ENCODE measurements at regions of chr1 and their contacts with region 1.

Region 1: DNA sequence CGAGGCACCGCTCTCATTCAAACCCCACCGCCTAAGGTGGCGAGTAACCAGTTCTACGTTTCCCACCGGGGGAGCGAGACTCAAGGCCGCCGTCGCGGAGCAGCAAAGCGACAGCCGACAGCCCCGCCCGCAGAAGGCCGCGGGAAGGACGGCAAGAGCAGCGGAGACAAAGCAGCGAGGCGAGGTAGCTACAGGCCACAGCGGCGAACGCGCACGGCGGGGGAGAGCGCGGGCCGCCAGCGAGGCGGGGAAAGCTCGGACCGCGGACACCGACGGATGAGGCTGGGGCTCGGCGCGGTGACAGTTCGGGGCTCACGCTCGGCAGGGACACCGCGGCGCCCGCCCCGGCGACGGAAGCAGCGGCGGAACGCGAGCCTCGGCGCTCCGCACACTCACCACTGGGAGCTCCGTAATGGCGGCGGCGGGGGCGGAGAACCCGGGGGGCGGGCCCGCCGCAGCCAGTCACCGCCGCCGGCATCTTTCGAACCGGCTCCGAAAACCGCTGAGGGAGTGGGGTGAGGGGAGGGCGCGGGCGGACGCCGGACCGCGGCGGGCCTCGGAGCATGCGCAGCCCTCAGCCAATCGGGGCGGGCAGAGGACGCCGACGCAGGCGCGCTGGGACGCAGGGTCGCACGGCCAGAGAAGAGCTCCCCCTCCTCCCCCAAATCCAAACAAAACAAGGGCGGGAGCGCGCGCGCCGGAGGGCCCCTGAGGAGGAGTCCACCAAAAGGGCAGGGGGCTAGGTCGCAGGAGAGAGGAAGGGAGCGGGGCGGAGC is 666 bp downstream of the HP1BP3 start:
- DNase-seq: peak; percentile 96 to 98
- ATAC-seq: peak; percentile 97
- H3K4me3 ChIP-seq: peak overlapping the region; percentile 59 to 83
- H3K27ac ChIP-seq: peak overlapping the region; percentile 82 to 89
- H3K4me1 ChIP-seq: no peaks in the 10 kb centered on the region
- H3K27me3 ChIP-seq: no peaks in the 10 kb centered on the region

Region 2: GRCh38 chr1:20551945-20552727 is 234.3 kb before region 1 on chr1 and contains the start of gene FAM43B:
- intact Hi-C with region 1: no loop called
- DNase-seq: peak; percentile 82 to 87
- ATAC-seq: peak; percentile 90
- H3K4me3 ChIP-seq: no peak within 1 kb of the TSS
- H3K27ac ChIP-seq: no peak within 1 kb of the TSS
- H3K4me1 ChIP-seq: no peaks in the 10 kb centered on the region
- H3K27me3 ChIP-seq: no peaks in the 10 kb centered on the region
- total RNA-seq, gene FAM43B: 0.52 to 2.7 TPM

Region 3: GRCh38 chr1:20732588-20733360 is 53.7 kb before region 1 on chr1 and contains the start of gene SH2D5:
- intact Hi-C with region 1: loop called in 1 of 2 experiments (anchors 5 kb)
- DNase-seq: peak; percentile 82 to 89
- ATAC-seq: peak; percentile 83
- H3K4me3 ChIP-seq: peak within 1 kb of the TSS; percentile 28 to 54
- H3K27ac ChIP-seq: peak within 1 kb of the TSS in 1 of 2 donors; percentile 78
- H3K4me1 ChIP-seq: no peaks in the 10 kb centered on the region
- H3K27me3 ChIP-seq: no peaks in the 10 kb centered on the region
- total RNA-seq, gene SH2D5: 0.26 to 0.39 TPM

Region 4: DNA sequence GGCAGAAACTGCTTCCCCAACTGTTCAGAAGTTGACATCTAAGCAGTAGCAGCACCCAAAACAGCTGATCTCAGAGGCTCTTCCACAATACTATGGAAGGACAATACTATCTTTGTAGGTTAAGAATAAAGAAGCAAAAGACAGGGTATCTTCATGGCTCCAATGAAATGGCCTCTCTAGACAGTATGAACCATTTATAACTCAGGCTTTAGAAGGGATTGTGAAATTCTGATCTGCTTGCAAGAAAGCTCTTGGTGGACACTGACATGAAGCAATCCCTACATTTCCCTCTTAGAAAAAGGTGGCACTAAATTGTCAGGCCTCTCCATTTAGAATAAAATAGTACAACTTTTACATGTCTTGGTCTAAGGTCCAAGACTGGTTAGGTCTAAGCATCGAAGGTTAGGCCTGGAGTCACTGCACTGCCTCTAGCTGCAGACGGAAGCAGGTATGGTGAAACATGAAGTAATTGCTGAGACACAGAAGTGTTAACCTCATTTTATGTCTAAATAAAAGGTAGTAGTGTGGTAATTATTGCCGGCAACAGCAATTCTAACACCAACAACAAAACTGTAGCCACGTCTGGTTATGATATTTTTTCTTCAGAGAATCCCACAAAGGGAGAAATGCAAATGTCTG is 51.2 kb after region 1 on chr1:
- intact Hi-C with region 1: no loop called
- DNase-seq: no peak
- ATAC-seq: no peak
- H3K4me3 ChIP-seq: no peak overlapping the region
- H3K27ac ChIP-seq: no peak overlapping the region
- H3K4me1 ChIP-seq: no peaks in the 10 kb centered on the region
- H3K27me3 ChIP-seq: no peaks in the 10 kb centered on the region

Region 5: DNA sequence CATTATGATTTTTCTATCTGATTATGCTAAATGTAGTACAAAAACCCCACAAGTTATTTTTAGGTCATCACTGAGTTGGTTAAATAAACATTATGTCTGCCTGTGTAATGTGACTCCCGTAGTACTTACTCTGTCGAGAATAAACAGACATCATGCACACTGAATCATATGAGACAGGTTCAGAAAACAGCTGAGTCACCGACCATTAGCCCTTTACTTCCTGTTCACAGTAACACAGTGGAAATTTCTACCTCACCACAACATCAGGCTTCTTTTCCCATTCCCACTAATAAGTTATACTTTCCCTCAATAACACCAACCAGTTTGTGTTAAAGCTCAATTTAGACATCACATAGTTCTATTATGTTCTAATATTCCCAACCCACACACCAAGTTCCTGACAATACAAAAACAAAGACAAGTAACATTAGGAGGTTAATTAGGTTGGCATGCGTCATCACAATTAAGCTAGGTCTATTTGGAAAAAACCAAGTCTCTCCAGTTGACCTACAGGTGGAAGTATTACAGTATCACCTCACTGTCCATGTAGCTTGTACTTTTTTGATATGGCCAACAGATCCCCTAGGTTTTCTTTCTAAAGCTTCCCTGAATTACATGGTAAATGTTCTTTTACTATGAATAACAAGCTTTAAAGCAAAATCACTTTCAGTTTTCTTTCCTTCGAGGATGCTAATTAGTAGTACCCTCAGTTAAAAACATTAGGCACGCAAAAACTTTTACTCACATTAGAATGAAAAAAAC is 236.0 kb after region 1 on chr1:
- intact Hi-C with region 1: loop called in 1 of 2 experiments (anchors 5 kb)
- DNase-seq: no peak
- ATAC-seq: peak; percentile 96
- H3K4me3 ChIP-seq: peak overlapping the region in 1 of 2 donors; percentile 26
- H3K27ac ChIP-seq: peak overlapping the region; percentile 40 to 95
- H3K4me1 ChIP-seq: no peaks in the 10 kb centered on the region
- H3K27me3 ChIP-seq: no peaks in the 10 kb centered on the region

Region 6: DNA sequence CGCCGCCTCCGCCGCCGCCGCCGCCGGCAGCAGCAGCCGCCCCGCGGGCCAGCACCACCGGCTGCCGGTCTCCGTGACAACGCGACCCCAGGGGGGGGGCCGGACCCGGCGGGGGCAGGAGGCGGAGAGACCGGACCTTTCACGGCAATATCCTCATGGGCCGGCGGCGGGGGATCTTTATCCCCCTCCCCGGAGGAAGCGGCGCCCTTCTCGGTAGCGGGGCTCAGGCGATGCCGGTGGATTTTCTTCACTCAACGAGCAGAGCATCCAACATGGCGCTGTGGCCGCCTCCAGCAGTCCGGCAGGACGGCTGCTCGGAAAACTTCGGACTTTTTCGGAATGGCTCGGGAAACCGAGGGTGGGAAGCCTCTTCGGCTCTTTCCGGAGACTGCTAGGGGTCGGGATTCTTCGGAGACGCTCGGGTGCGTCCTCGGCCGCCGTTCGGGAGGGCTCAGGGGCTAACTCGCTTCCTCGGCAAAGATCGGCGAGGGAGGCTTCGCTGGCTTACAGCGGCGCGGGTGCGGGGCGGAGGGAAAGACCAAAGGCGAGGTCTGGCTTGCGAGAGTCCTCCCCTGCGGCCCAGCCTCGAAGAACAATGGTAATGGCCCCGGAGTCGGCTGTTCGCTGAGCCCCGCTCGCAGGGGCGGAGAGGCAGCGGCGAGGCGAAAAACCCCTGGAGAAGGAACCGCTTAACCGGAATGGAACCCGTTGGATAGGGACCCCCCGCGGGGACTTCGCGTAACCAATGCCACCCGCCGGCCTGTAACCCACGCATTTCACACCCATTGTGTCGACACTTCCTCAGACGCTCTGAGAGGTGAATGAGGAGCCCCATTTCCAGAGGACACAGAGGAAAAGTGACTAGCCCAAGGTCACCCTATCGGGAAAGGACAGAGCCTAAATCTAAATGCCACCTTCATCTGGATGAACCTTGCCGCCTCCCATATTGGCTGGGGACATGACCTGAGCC is 390.4 kb after region 1 on chr1 and contains the start of gene EIF4G3:
- intact Hi-C with region 1: loop called in 1 of 2 experiments (anchors 2 kb)
- DNase-seq: peak; percentile 99 to 100
- ATAC-seq: peak; percentile 98
- H3K4me3 ChIP-seq: peak within 1 kb of the TSS; percentile 84 to 96
- H3K27ac ChIP-seq: peak within 1 kb of the TSS in 1 of 2 donors; percentile 76
- H3K4me1 ChIP-seq: no peaks in the 10 kb centered on the region
- H3K27me3 ChIP-seq: no peaks in the 10 kb centered on the region
- total RNA-seq, gene EIF4G3: 59.0 to 84.4 TPM

Measured in aorta (tissue), 5 donors.